Heart right ventricle (tissue), 16 donors: ENCODE measurements at regions of chr9 and their contacts with region 1.

Region 1: DNA sequence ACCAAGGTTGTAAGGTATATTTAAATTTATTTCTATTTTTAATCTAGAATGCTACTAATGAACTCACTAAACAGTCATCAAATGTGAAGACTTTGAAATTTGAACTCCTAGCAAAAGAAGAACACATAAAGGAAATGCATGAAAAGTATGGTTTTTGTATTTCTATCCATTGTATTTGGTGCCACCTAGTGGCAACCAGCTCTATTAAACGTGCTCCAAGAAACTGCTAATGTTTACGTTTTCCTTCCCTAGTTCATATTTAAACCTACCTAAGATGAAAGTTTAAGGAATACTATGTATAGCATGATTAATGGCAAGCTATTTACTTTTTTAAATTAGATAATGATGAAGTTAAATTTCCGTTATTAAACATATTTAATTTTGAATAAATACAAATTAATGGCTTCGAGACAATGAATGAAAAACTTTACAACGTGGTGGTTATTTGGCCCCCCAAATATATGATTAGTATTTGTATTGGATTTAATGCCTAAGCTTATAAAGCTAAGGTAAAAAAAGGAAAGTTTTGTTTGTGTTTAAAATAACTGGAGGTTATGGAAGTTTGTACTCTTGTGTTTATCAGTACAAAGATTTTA is 115.9 kb upstream of the SH3GL2 start:
- DNase-seq: peak in 1 of 2 donors; percentile 27
- ATAC-seq: no peak
- H3K4me3 ChIP-seq: no peak overlapping the region
- H3K27ac ChIP-seq: no peak overlapping the region
- H3K4me1 ChIP-seq: no peaks in the 10 kb centered on the region
- H3K27me3 ChIP-seq: no peaks in the 10 kb centered on the region
- CTCF ChIP-seq: peak; percentile 45 to 90 (median 76)

Region 2: DNA sequence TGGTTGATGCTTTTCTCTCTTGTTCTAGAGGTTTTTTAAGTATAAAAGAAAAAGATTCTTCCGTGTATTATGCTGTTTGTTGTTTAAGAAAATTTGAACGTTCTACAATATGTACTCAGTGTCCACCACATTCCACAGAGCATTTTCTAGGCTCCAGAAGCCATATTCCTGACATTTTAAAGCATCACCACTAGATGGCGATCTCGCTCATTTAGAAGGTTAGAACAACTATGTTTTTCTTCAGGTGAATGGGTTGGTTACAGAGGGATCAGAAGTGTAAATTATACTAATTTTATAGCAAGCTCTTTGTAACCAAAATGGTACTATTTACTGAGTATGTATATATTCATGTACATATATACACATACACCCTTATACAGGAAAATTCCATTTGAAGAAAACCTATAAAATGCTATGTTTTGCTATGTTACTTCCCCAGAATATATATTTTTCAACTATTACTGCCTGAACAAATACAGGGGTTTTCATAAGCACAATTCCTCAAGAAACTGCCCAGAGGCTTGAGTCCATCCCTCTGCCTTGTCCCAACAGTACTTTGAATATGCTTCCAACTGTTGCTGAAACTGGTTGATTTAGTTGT is 1625.8 kb before region 1 on chr9:
- intact Hi-C with region 1: loop called in 1 of 10 experiments (anchors 2 kb)
- DNase-seq: peak in 1 of 2 donors; percentile 9
- ATAC-seq: peak in 1 of 8 donors; percentile 29
- H3K4me3 ChIP-seq: no peak overlapping the region
- H3K27ac ChIP-seq: no peak overlapping the region
- H3K4me1 ChIP-seq: no peaks in the 10 kb centered on the region
- H3K27me3 ChIP-seq: no peaks in the 10 kb centered on the region
- CTCF ChIP-seq: peak; percentile 33 to 76 (median 72)

Region 3: DNA sequence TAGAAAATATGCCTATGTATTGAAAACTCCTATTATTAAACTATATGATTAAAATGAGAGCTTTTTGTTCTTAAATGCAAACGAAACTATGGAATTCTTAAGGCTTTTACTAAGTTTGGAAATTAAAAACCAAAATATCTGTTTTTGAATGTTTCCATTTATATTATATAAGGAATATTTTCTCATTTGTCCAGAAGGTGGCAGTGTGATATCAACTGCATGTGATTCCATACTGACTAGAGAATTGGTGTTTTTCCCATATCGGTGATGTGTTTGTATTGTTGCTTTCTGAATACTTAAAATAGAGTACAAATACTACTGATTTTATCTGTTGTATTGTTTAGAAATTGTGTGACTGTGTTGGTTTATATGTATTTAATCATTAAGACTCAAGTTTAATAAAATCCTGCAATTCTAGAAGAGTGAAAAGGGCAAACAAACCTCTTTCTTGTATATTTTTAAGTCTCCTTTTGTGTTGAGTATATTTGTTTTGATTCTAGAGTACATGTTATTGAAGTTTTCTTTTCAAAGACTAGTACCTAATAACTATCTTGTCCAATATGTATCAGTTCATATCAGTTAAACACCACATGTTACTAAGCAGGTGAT is 1589.3 kb before region 1 on chr9:
- intact Hi-C with region 1: loop called in 3 of 10 experiments (anchors 10 kb)
- DNase-seq: no peak
- ATAC-seq: no peak
- H3K4me3 ChIP-seq: no peak overlapping the region
- H3K27ac ChIP-seq: no peak overlapping the region
- H3K4me1 ChIP-seq: no peaks in the 10 kb centered on the region
- H3K27me3 ChIP-seq: no peaks in the 10 kb centered on the region
- CTCF ChIP-seq: peak; percentile 34 to 84 (median 72)

Region 4: DNA sequence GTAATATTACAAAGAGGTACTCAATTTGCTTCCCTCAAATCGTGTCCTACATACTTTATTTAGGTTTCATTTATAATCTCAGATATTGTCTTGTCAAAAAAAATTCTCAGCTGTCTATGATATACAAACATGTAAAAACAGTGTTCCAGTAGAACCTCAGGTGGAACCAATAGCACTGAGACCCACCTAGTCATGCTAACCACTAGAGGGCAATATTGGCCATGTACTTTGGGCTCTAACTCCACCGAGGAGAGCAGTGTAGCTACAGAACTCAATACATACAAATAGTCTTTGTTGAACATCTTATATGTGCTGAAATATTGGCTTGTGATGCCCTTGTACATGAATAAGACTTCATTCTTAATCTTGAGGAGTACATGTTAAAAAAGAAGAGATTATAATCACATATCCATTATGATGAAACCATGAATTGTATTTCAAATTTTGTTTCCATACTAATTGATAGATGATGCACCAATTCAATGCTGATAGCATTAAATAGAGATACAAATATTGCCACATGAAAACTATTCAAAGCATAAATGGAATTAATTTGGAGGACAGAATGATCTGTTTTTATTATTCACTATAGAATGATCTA is 399.3 kb before region 1 on chr9:
- intact Hi-C with region 1: loop called in 2 of 10 experiments (anchors 5 kb)
- DNase-seq: no peak
- ATAC-seq: peak in 3 of 8 donors; percentile 55 to 72 (median 67)
- H3K4me3 ChIP-seq: no peak overlapping the region
- H3K27ac ChIP-seq: no peak overlapping the region
- H3K4me1 ChIP-seq: no peaks in the 10 kb centered on the region
- H3K27me3 ChIP-seq: no peaks in the 10 kb centered on the region
- CTCF ChIP-seq: peak; percentile 7 to 77 (median 69)

Region 5: GRCh38 chr9:17116400-17116837 is 346.5 kb before region 1 on chr9:
- intact Hi-C with region 1: loop called (anchors 1 to 10 kb)
- DNase-seq: no peak
- ATAC-seq: peak in 2 of 8 donors; percentile 20 to 43
- H3K4me3 ChIP-seq: no peak overlapping the region
- H3K27ac ChIP-seq: peak overlapping the region in 1 of 10 donors; percentile 7
- H3K4me1 ChIP-seq: peaks cover 0 to 8% (median 0%) of the 10 kb centered on the region in 9 donors
- H3K27me3 ChIP-seq: peaks cover 0 to 5% (median 0%) of the 10 kb centered on the region in 7 donors
- CTCF ChIP-seq: peak in 8 of 9 donors; percentile 25 to 71 (median 58)

Region 6: GRCh38 chr9:17318821-17319320 is 144.1 kb before region 1 on chr9:
- intact Hi-C with region 1: no loop called
- DNase-seq: no peak
- ATAC-seq: no peak
- H3K4me3 ChIP-seq: no peak overlapping the region
- H3K27ac ChIP-seq: no peak overlapping the region
- H3K4me1 ChIP-seq: no peaks in the 10 kb centered on the region
- H3K27me3 ChIP-seq: no peaks in the 10 kb centered on the region
- CTCF ChIP-seq: no peak

Region 7: DNA sequence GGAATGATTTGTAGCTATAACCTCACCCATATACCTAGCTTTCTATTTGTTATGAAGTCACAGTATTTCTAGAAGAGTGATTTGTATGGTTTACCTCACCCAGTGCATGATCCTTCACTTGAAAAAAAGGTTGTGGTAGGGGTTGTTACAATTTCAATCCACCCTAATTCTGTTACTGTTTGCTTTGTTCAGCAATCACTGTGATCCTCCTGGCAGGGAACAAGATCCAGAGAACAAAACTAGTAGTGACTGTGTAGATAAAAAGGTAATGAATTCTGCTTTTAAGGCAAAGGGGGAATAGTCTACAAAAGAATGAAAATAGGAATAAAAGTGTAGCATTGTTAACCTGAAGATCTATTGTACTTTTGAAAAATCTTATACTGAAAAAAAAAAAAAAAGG is 75.4 kb before region 1 on chr9:
- intact Hi-C with region 1: no loop called
- DNase-seq: no peak
- ATAC-seq: no peak
- H3K4me3 ChIP-seq: no peak overlapping the region
- H3K27ac ChIP-seq: no peak overlapping the region
- H3K4me1 ChIP-seq: no peaks in the 10 kb centered on the region
- H3K27me3 ChIP-seq: no peaks in the 10 kb centered on the region
- CTCF ChIP-seq: no peak

Region 8: DNA sequence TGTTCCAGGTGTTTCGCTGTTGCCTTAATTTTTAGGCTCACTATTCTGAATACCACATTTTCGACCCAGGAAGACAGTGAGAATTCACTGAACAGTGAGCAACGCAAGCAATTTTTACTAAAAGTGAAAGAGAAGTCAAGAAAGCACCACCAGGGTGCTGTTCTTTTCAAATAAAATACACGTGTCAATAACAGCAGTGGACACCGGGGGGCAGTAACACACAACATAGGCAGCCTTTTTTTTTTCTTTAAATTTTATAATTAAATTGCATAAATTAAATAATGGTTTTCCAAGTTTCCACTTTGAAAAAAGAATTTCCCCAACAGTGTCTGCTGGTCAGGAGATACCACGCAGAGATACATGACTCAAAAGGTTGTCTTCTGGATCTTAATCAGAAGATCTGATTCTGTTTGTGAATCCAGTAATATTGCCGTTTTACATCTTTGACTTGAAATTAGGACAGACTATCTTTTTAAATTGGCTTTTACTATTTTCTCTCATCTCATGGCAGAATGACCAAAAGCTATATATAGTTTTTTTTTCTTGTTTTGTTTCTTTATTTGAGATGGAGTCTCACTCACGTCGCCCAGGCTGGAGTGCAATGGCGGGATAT is 68.8 kb after region 1 on chr9:
- intact Hi-C with region 1: no loop called
- DNase-seq: no peak
- ATAC-seq: peak in 1 of 8 donors; percentile 20
- H3K4me3 ChIP-seq: no peak overlapping the region
- H3K27ac ChIP-seq: no peak overlapping the region
- H3K4me1 ChIP-seq: no peaks in the 10 kb centered on the region
- H3K27me3 ChIP-seq: peaks cover 0 to 4% (median 0%) of the 10 kb centered on the region in 7 donors
- CTCF ChIP-seq: peak; percentile 31 to 69 (median 64)